H1 (cell line): ENCODE measurements at regions of chr13 and their contacts with region 1.

Region 1: DNA sequence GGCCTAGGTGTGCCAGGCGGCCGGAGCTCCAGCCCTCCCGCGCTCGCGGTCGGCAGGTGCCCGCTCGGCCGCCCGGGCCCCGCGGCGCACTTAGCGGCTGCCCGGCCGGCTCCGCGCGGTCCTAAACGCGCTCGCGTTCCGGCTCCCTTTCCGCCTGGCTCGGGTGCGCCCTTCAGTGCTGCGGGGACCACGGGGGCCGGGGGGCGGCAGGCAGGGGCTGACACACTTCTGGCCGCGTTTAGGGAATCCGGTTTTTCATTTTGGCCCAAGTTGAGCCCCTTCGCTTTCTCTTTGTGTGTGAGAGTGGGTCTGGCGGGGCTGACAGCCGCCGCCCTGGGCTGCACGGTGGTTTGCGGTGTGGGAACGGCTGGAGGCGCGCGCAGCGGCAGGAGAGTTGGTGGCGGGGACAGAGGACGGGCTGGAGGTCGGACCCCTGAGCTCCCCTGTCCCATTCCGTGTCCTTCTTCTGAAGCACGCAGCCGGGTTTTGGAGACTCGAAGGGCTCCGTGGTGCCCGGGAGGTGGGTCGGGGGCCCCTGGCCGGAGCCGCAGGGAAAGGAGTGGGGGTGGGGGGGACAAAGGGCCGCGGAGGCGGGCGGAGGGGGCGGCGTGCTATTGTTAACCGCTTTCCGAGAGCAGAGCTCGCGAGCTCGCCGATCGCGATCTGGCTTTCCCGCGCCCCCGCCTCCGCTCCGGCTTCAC is 3.1 kb downstream of the FGF9 start:
- DNase-seq: peak in 1 of 2 experiments; percentile 82
- H3K4me3 ChIP-seq: peak overlapping the region; percentile 44 to 82 (median 50)
- H3K27ac ChIP-seq: no peak overlapping the region
- H3K4me1 ChIP-seq: peaks cover 3 to 20% (median 10%) of the 10 kb centered on the region in 4 experiments
- H3K27me3 ChIP-seq: peaks cover 31 to 79% (median 71%) of the 10 kb centered on the region in 4 experiments
- CTCF ChIP-seq: peak in 1 of 3 experiments; percentile 0; a peak in 1 of 4 replicates
- EP300 ChIP-seq: no peak
- POLR2A ChIP-seq: no peak
- RAD21 ChIP-seq: no peak

Region 2: DNA sequence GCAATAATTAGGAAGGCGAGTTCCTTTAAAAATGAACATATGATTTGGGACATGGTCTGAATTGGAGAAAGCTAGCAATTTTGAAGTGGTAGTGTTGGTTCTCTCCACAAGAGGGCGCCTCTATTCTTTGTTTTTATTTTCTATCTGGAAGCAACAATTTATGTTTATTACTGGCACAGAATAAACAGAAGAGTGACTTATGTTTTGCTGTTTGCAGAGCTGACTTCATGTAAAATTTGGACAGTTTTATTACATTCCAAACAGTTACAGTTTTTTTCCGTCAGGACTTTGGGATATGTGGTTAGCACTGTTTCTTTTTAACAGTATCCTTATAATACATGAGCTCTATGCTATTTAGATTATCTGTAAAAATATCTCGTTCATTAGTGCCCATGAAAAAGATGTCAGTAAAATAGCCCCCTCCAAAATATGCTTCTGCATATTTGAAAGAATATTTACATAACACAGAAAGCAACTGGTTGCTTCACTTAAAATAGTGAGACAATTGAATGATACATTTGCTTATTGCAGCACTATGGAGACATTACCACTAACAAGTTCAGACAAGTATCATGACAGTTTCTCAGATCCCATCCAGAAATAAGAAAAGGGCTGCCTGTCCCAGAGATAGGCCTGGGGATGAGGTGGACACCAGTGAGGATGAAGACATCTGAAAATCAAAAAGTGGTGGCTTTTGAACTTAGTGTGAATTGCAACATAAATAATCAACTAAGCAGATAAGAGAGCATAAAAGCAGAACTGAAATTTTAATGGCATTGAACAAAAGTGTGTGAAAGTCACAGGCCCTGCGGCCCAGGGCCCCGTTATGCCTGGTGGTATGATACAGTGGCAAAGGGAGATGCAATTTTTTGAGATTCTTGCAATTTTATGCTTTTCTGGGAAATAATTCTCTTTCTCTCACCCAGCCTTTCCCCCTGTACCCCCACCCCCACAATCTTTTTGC is 35.3 kb before region 1 on chr13:
- CTCF ChIA-PET with region 1: interaction called, 41 read pairs
- POLR2A ChIA-PET with region 1: no interaction called
- DNase-seq: peak in 1 of 2 experiments; percentile 53
- H3K4me3 ChIP-seq: no peak overlapping the region
- H3K27ac ChIP-seq: no peak overlapping the region
- H3K4me1 ChIP-seq: no peaks in the 10 kb centered on the region
- H3K27me3 ChIP-seq: no peaks in the 10 kb centered on the region
- CTCF ChIP-seq: peak in 2 of 3 experiments; percentile 28 to 55; a peak in 2 of 4 replicates
- EP300 ChIP-seq: no peak
- POLR2A ChIP-seq: no peak
- RAD21 ChIP-seq: peak; percentile 66 to 69

Region 3: DNA sequence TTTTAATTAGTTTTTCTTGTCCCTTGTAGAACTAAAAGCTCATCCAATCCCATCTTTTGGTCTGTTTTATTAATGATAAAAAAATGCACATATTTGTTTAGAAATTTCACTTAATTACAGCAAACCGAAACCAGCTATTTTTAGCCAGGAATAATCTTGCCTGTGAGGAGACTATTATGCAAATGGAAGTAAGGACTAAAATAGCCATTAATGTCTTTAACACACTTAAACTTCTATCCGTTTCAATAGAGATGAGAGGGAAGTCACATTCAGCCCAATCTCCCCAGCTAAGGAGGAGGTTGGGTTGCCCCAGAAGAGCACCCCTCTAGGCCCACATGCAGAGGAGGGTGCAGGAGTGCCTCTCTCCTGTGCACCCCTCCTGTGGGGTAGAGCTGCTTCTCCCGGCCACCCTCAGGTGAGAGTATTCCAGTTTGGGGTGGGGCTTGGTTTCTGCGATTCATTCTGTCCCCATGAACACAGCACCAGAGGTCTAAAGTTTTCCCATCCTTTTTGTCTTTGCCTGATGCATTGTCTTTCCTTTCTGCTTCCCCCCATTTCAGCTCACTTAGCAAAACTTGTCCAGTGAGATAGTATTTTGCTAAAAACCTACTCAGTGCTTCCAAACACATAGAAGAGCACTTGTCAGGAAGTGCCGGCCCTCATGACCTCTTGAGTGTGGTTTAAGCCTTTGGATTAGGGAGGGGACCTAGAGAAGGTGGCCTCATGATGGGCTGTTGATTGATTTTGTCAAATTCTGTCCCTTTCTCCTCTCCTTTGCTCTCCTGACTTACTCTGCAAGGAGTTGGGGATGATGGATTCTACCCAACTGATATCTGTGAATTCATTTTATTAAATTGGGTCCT is 25.1 kb after region 1 on chr13:
- CTCF ChIA-PET with region 1: interaction called, 11 read pairs
- POLR2A ChIA-PET with region 1: no interaction called
- DNase-seq: no peak
- H3K4me3 ChIP-seq: no peak overlapping the region
- H3K27ac ChIP-seq: no peak overlapping the region
- H3K4me1 ChIP-seq: peaks cover 0 to 7% (median 0%) of the 10 kb centered on the region in 4 experiments; a peak in 3 of 7 replicates
- H3K27me3 ChIP-seq: no peaks in the 10 kb centered on the region
- CTCF ChIP-seq: no peak
- EP300 ChIP-seq: no peak
- POLR2A ChIP-seq: no peak
- RAD21 ChIP-seq: no peak